Transverse colon (tissue), 4 donors: ENCODE measurements at regions of chr11 and their contacts with region 1.

Region 1: GRCh38 chr11:65637794-65638317 is at the start of gene SIPA1:
- DNase-seq: peak; percentile 80
- H3K4me3 ChIP-seq: peak within 1 kb of the TSS; percentile 48 to 77 (median 50)
- H3K27ac ChIP-seq: peak within 1 kb of the TSS; percentile 84 to 92 (median 88)
- H3K4me1 ChIP-seq: peaks cover 9 to 38% (median 32%) of the 10 kb centered on the region in 4 donors
- H3K27me3 ChIP-seq: no peaks in the 10 kb centered on the region
- CTCF ChIP-seq: peak in 3 of 5 experiments; percentile 10 to 21 (median 20)
- EP300 ChIP-seq: no peak
- POLR2A ChIP-seq: peak; percentile 51
- total RNA-seq, gene SIPA1: 22.4 to 174 (median 30.9) TPM

Region 2: GRCh38 chr11:65695456-65696241 is 57.8 kb after region 1 on chr11:
- in situ Hi-C with region 1: no loop called
- intact Hi-C with region 1: loop called (anchors 10 kb)
- DNase-seq: peak; percentile 82
- H3K4me3 ChIP-seq: no peak overlapping the region
- H3K27ac ChIP-seq: peak overlapping the region in 3 of 4 donors; percentile 9 to 64 (median 33)
- H3K4me1 ChIP-seq: peaks cover 0 to 16% (median 7%) of the 10 kb centered on the region in 4 donors
- H3K27me3 ChIP-seq: no peaks in the 10 kb centered on the region
- CTCF ChIP-seq: no peak
- EP300 ChIP-seq: no peak
- POLR2A ChIP-seq: no peak